ENCODE measurements at regions of chr6 and their contacts with region 1.

Region 1: GRCh38 chr6:138115877-138116660 is 8.8 kb upstream of the PERP start:
- DNase-seq: no peak
- H3K4me3 ChIP-seq: no peak overlapping the region
- H3K27ac ChIP-seq: no peak overlapping the region
- H3K4me1 ChIP-seq: no peaks in the 10 kb centered on the region
- H3K27me3 ChIP-seq: peaks cover 15% of the 10 kb centered on the region
- CTCF ChIP-seq: peak; percentile 75

Region 2: DNA sequence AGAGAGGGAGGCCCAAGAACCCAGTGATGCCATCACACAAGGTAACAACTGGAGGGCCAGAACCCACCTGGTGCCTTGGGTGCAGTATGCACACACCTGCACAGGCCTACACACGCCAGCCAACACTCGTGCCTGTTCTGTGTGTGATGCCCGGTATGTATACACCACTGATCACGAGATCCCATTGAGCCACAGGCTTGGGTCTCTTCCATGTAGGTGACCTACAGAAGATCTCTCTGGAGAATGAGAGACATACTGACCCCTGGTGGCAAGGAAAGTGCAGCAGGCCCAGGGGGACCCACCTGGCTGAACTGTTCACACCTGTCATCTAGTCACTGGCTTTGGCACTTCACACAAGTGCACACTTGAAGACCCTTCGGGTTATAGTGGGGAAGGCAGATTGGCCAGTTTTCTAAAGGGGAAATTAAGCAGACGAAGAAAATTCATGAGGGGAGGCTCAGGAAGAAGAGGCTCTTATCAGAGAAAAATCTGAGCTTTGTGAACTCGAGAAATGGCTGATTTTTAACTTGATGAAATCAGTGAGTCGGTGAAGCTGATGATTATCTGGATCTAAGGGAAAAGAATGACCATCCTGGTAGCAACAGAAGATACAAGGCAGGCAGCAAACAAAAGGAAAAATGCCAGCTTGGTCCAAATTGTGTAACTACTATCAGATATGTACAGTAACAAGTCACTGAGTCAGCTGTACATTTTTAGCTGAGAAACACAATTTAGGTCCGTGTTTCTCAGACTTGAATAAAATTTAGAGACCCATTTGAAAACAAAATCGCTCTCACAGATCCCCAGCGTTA is 171.3 kb after region 1 on chr6:
- intact Hi-C with region 1: loop called (anchors 5 kb)
- DNase-seq: no peak
- H3K4me3 ChIP-seq: no peak overlapping the region
- H3K27ac ChIP-seq: no peak overlapping the region
- H3K4me1 ChIP-seq: no peaks in the 10 kb centered on the region
- H3K27me3 ChIP-seq: no peaks in the 10 kb centered on the region
- CTCF ChIP-seq: peak; percentile 68

Region 3: GRCh38 chr6:138403801-138404661 is 288.0 kb after region 1 on chr6 and contains the start of gene HEBP2:
- intact Hi-C with region 1: loop called (anchors 10 kb)
- DNase-seq: peak; percentile 96
- H3K4me3 ChIP-seq: peak within 1 kb of the TSS; percentile 84
- H3K27ac ChIP-seq: peak within 1 kb of the TSS; percentile 97
- H3K4me1 ChIP-seq: peaks cover 47% of the 10 kb centered on the region
- H3K27me3 ChIP-seq: no peaks in the 10 kb centered on the region
- CTCF ChIP-seq: peak; percentile 78
- total RNA-seq, gene HEBP2: 101 TPM

Region 4: GRCh38 chr6:138588805-138589434 is 472.9 kb after region 1 on chr6:
- intact Hi-C with region 1: loop called (anchors 10 kb)
- DNase-seq: peak; percentile 38
- H3K4me3 ChIP-seq: no peak overlapping the region
- H3K27ac ChIP-seq: no peak overlapping the region
- H3K4me1 ChIP-seq: peaks cover 21% of the 10 kb centered on the region
- H3K27me3 ChIP-seq: no peaks in the 10 kb centered on the region
- CTCF ChIP-seq: peak; percentile 95

Measured in left ventricle myocardium inferior (tissue), 1 donor.